ENCODE measurements at regions of chr3 and their contacts with region 1.

Region 1: GRCh38 chr3:47578119-47578632 is 489 bp downstream of the CSPG5 start:
- DNase-seq: peak in 1 of 2 donors; percentile 70
- H3K4me3 ChIP-seq: peak overlapping the region; percentile 76 to 86
- H3K27ac ChIP-seq: no peak overlapping the region
- H3K4me1 ChIP-seq: peaks cover 0 to 10% of the 10 kb centered on the region in 2 donors
- H3K27me3 ChIP-seq: no peaks in the 10 kb centered on the region
- CTCF ChIP-seq: no peak

Region 2: DNA sequence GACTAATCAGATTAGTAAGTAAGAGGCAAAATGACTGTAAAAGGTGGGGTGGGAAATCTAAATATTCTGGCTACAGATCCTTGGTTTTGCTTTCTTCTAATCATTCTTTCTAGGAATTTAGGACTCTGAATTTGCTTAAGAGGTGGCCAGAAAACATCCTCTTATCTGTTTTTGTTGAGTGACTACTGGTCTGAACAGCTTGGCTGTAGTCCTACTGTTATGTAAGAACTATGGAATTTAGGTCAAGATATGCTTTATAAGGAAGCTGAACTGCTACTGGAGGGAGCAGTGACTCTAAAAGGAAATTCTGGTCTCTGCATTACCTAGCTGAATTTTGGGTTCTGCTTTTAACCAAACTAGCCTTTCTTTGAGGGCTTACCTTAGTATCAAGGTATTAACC is 34.0 kb after region 1 on chr3:
- intact Hi-C with region 1: loop called (anchors 2 kb)
- DNase-seq: no peak
- H3K4me3 ChIP-seq: no peak overlapping the region
- H3K27ac ChIP-seq: peak overlapping the region; percentile 41 to 60
- H3K4me1 ChIP-seq: peaks cover 0 to 12% of the 10 kb centered on the region in 2 donors
- H3K27me3 ChIP-seq: no peaks in the 10 kb centered on the region
- CTCF ChIP-seq: no peak

Region 3: DNA sequence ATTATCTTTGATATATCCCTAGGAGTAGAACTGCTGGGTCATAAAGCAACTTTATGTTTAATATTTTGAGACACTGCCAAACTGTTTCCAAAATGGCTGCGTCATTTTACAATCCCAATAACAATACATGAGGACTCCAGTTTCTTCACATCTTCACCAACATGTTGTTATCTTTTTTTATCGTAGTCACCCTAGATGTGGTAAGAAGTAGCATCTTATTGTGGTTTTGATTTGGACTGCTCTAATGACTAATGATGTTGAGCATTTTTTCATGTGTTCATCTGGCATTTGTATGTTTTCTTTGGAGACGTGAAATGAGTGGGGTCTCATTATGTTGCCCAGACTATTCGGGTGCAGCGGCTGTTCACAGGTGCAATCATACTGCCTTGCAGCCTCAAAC is 354.2 kb after region 1 on chr3:
- intact Hi-C with region 1: no loop called
- DNase-seq: no peak
- H3K4me3 ChIP-seq: no peak overlapping the region
- H3K27ac ChIP-seq: no peak overlapping the region
- H3K4me1 ChIP-seq: no peaks in the 10 kb centered on the region
- H3K27me3 ChIP-seq: no peaks in the 10 kb centered on the region
- CTCF ChIP-seq: no peak

Region 4: DNA sequence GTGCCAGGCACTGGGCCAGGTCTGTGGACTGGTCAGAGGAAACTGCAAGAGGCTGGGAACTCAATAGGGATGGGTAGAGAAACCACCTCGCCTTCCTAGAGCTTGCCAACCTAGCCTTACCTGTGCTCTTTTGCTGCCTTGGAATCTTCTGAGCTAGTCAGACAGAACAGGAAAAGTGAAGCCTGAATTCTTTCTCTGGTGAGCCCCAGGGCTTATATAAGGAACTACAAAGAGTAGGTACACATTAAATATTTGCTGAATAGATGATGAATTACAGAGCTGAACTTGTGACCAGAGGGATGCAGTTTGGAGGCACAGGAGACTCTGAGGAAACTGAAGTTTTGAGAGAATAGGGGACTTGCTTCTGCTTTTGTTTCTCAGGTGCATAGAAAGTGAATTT is 778.2 kb after region 1 on chr3:
- intact Hi-C with region 1: no loop called
- DNase-seq: no peak
- H3K4me3 ChIP-seq: no peak overlapping the region
- H3K27ac ChIP-seq: no peak overlapping the region
- H3K4me1 ChIP-seq: no peaks in the 10 kb centered on the region
- H3K27me3 ChIP-seq: no peaks in the 10 kb centered on the region
- CTCF ChIP-seq: no peak

Measured in ascending aorta (tissue), 2 donors.